ENCODE measurements at regions of chr6 and their contacts with region 1.

Region 1: GRCh38 chr6:26553635-26554446 is 15.7 kb downstream of the HMGN4 start:
- DNase-seq: peak; percentile 78
- H3K4me3 Mint-ChIP-seq: no peak overlapping the region
- H3K27ac Mint-ChIP-seq: no peak overlapping the region
- H3K4me1 Mint-ChIP-seq: peaks cover 24% of the 10 kb centered on the region
- H3K27me3 Mint-ChIP-seq: no peaks in the 10 kb centered on the region

Region 2: GRCh38 chr6:26312501-26313390 is 241.1 kb before region 1 on chr6:
- intact Hi-C with region 1: loop called (anchors 2 kb)
- DNase-seq: peak; percentile 79
- H3K4me3 Mint-ChIP-seq: peak overlapping the region; percentile 85
- H3K27ac Mint-ChIP-seq: peak overlapping the region; percentile 82
- H3K4me1 Mint-ChIP-seq: peaks cover 50% of the 10 kb centered on the region
- H3K27me3 Mint-ChIP-seq: no peaks in the 10 kb centered on the region

Region 3: DNA sequence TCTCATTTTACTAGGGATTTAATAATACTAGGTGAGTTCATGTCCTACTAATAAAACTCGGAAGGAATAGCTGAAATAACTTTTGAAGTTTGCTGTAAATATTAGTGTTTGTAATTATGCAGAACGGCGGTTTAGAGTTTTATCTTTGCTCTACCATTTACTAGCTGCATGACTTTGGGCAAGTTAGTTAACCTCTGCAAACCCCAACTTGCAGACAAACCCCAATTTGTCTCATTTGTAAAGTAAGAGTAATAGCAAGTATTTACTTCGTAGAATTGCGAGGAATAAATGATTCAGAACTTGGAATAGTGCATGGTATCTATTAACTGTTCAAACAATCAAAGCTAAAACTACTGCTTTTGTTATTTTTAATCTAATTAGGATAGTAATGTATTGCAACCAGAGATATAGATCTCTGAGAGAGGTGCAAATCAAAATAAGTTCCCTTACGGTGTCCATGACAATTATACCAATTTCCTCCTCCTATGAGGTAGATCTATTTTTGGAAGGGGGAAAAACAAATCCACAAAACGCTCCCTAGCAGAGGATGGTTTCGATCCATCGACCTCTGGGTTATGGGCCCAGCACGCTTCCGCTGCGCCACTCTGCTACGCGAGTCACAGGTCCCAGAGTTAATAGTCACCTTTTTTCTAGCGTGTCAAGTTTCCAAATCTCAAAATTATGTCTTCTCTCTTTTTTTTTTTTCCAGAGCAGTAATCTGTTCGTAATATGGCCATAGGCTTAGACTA is 223.9 kb before region 1 on chr6:
- intact Hi-C with region 1: loop called (anchors 1 kb)
- DNase-seq: peak; percentile 55
- H3K4me3 Mint-ChIP-seq: peak overlapping the region; percentile 84
- H3K27ac Mint-ChIP-seq: peak overlapping the region; percentile 43
- H3K4me1 Mint-ChIP-seq: peaks cover 48% of the 10 kb centered on the region
- H3K27me3 Mint-ChIP-seq: peaks cover 16% of the 10 kb centered on the region

Region 4: DNA sequence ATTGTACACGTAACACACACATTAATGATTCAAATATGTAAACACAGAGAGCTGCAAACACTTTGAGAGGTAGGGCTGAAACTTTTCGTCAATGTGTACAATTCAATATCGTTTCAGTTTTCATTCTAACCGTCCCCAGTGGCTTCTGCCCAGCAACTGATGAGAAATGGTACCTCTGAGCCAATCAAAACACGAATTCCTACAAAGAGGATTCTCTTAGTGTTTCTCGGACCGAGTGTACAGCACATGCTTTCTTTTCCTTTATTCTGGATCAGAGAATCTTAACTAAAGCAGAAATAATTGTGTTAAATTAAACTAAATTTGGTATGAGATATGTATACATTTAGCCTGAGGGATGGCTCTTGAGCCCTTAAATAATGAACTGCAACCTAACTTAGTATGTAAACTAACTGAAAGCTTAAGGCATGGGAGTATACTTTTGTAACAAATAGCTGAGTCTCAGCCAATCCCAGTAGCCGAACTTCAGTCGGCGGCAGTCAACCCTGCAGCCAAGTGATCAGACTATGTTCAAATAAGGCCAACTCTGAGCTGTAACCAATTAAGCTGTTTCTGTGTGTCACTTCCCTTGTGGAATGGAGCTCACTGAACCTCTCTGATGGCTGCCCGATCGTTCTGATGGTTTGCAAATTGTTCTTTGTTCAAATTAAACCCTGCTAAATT is 79.9 kb before region 1 on chr6:
- intact Hi-C with region 1: loop called (anchors 2 kb)
- DNase-seq: peak; percentile 79
- H3K4me3 Mint-ChIP-seq: peak overlapping the region; percentile 100
- H3K27ac Mint-ChIP-seq: peak overlapping the region; percentile 100
- H3K4me1 Mint-ChIP-seq: peaks cover 29% of the 10 kb centered on the region
- H3K27me3 Mint-ChIP-seq: no peaks in the 10 kb centered on the region

Region 5: GRCh38 chr6:26520853-26521599 is 32.8 kb before region 1 on chr6:
- intact Hi-C with region 1: loop called (anchors 1 kb)
- DNase-seq: peak; percentile 78
- H3K4me3 Mint-ChIP-seq: peak overlapping the region; percentile 82
- H3K27ac Mint-ChIP-seq: peak overlapping the region; percentile 83
- H3K4me1 Mint-ChIP-seq: peaks cover 39% of the 10 kb centered on the region
- H3K27me3 Mint-ChIP-seq: peaks cover 2% of the 10 kb centered on the region

Region 6: DNA sequence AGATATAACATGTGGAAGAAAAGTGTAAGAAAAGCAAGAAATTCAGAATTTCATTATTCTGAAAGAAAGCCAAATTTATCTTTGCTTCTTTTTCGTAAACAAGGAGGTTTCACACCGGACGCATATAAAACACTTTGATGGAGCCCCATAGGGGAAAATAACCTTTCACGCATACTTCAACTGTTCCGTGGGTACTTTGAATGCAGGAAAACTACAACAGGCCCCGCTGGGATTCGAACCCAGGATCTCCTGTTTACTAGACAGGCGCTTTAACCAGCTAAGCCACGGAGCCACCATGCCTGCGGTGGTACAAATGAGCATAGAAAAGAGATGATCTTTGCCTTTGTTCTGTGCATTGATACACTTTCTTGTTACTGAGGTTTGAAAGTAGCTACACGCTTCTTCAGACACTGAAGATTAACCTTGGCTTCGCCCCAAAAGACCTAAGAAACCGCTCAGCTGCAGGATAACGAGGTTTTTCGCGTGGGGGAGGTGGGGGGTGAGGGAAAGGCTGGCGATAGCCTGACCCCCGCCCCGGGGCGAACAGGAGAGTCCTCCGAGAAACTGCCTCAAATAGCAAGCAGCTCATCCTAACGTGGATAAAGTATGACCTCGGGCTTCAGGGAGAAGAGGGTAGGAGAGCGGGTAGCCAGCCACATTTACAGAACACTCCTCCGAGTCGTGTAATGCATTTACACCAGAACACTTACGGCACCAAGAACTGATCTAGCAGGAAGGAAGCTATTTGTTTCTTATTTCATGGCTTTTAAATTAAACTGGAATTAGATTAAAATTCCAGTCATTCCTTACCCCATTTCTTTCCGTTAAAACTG is 20.9 kb before region 1 on chr6:
- intact Hi-C with region 1: loop called (anchors 1 kb)
- DNase-seq: peak; percentile 86
- H3K4me3 Mint-ChIP-seq: peak overlapping the region; percentile 95
- H3K27ac Mint-ChIP-seq: peak overlapping the region; percentile 94
- H3K4me1 Mint-ChIP-seq: peaks cover 35% of the 10 kb centered on the region
- H3K27me3 Mint-ChIP-seq: no peaks in the 10 kb centered on the region

Region 7: DNA sequence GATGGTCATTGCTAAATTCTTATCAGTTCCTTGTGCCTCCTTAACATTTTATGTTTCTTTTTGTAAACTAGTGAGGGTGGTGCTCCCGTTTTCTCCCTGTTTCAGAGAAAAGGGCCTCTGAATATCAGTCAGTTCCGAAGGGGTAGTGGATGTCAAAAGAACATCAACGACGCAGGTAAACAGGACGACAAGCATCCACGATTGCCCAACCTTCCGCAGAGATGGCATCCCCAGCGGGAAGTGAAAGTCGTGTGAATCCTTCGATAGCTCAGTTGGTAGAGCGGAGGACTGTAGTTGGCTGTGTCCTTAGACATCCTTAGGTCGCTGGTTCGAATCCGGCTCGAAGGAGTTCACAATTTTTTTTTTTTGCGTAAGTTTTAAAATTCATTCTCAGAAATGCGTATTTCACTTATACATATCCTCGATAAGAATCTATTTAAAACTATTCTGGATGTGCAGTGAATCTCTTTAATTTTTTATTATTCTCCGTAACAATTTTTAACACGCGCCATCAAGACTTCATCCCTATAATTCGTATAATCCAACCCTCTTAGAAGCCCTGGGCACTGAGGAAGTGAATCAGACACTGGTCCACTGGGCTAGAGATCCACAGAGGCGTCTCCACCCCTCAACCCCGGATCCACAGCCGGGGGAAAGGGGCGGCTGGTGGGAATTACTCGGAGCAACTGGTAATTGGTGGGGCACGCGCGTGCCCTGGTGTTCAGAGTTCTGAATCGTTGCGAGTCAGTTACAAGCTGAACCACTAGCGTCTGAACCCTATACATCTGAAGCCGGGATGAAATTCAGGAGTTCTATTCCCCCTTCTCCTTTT is 15.0 kb after region 1 on chr6:
- intact Hi-C with region 1: loop called (anchors 1 kb)
- DNase-seq: peak; percentile 95
- H3K4me3 Mint-ChIP-seq: peak overlapping the region; percentile 93
- H3K27ac Mint-ChIP-seq: peak overlapping the region; percentile 78
- H3K4me1 Mint-ChIP-seq: peaks cover 32% of the 10 kb centered on the region
- H3K27me3 Mint-ChIP-seq: no peaks in the 10 kb centered on the region